ENCODE measurements at regions of chr4 and their contacts with region 1.

Region 1: GRCh38 chr4:87006676-87007527 is 72.1 kb downstream of the AFF1 start:
- DNase-seq: peak; percentile 97
- H3K4me3 Mint-ChIP-seq: peak overlapping the region; percentile 95
- H3K27ac Mint-ChIP-seq: peak overlapping the region; percentile 99
- H3K4me1 Mint-ChIP-seq: peaks cover 50% of the 10 kb centered on the region
- H3K27me3 Mint-ChIP-seq: no peaks in the 10 kb centered on the region

Region 2: DNA sequence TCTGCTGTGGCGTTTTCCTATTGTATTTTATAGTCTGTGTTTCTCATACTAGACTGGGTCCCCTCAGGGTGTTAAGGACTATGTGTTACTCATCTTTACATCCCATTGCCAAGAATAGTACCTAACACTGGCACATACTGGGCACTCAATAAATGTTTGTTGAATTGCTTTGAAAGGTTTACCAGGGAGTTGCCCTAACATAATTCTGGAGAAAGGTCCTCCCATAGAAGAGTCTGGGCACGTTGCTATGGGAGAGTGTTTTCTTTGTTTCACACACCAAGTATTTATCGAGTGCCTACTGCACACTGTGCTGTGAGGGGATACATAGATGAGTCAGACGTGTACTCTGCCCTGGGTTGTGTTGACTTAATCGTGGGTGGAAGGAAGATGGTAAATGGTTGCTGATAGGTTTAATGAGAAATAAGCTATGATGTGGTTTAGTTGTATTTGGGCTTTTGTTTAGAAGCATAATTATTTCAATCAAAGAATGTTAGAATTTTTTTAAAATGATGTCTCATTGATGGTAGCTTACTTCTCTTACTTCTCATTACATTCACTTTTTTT is 29.2 kb before region 1 on chr4:
- intact Hi-C with region 1: loop called (anchors 1 kb)
- DNase-seq: peak; percentile 61
- H3K4me3 Mint-ChIP-seq: no peak overlapping the region
- H3K27ac Mint-ChIP-seq: no peak overlapping the region
- H3K4me1 Mint-ChIP-seq: peaks cover 44% of the 10 kb centered on the region
- H3K27me3 Mint-ChIP-seq: no peaks in the 10 kb centered on the region

Region 3: DNA sequence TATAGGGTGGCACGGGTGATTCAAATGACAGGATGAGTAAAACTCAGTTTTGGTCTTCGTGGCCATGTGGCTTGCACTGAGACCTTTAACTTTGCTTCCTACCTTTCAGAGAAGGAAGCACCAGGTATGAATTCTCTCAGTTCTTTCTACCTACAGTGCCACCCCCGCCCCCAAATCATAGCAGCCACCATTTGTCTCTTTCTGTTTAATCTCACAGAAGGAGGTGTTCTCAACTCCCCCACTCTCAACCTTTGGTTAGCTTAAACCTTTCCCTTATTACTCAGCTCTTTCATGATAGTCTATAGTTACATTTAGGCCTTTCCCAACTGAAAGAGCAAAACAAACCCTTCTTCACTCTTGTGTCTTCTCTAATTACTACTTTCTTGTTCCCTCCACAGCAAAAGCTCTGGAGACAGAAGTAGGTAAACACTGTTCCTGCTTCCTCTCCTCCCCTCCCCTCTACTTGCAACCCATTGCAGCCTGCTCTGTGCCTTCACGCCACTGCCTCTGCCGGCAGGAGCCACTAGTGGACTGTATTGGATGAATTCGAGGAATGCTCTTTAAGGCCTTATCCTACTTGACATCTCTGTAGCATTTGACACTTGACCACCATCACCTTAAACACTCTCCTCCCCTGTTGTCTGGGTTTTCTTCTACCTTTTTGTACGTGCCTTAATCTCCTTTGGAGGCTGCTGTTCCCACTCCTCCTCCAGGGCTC is 51.6 kb after region 1 on chr4:
- intact Hi-C with region 1: loop called (anchors 1 kb)
- DNase-seq: no peak
- H3K4me3 Mint-ChIP-seq: peak overlapping the region; percentile 39
- H3K27ac Mint-ChIP-seq: peak overlapping the region; percentile 75
- H3K4me1 Mint-ChIP-seq: peaks cover 47% of the 10 kb centered on the region
- H3K27me3 Mint-ChIP-seq: no peaks in the 10 kb centered on the region

Region 4: DNA sequence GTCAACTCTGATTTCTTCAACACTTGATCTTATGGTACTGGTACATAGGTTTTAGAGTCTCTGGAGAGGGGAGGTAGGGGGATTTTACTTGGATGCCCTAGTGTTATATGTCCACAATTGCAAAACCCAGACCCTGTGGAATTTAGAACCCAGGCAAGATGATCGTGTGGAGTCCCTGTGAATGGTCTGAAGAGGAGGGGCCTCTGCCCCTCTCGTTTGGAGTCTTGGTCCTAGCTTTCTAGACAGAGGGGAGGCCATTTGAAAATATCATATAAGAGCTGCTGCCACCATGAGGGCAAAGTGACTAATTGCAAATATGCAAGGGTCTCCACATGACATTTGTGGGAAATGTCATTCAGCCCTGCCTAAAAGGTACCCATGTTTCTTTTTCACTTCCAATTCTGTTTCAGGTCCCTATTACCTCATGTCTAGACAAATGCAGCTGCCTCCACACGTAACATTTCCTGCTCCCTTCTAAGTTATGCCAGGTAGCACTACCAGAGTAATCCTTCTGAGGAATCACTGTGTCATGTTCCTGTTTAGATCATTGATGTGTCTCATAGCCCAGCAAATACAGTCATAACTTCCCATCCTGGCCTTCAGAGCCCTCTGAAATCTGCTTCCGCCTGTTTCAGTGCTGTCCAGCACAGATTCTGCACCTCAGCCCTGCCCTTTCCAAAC is 86.7 kb after region 1 on chr4:
- intact Hi-C with region 1: loop called (anchors 1 kb)
- DNase-seq: peak; percentile 80
- H3K4me3 Mint-ChIP-seq: no peak overlapping the region
- H3K27ac Mint-ChIP-seq: peak overlapping the region; percentile 34
- H3K4me1 Mint-ChIP-seq: peaks cover 22% of the 10 kb centered on the region
- H3K27me3 Mint-ChIP-seq: no peaks in the 10 kb centered on the region

Region 5: DNA sequence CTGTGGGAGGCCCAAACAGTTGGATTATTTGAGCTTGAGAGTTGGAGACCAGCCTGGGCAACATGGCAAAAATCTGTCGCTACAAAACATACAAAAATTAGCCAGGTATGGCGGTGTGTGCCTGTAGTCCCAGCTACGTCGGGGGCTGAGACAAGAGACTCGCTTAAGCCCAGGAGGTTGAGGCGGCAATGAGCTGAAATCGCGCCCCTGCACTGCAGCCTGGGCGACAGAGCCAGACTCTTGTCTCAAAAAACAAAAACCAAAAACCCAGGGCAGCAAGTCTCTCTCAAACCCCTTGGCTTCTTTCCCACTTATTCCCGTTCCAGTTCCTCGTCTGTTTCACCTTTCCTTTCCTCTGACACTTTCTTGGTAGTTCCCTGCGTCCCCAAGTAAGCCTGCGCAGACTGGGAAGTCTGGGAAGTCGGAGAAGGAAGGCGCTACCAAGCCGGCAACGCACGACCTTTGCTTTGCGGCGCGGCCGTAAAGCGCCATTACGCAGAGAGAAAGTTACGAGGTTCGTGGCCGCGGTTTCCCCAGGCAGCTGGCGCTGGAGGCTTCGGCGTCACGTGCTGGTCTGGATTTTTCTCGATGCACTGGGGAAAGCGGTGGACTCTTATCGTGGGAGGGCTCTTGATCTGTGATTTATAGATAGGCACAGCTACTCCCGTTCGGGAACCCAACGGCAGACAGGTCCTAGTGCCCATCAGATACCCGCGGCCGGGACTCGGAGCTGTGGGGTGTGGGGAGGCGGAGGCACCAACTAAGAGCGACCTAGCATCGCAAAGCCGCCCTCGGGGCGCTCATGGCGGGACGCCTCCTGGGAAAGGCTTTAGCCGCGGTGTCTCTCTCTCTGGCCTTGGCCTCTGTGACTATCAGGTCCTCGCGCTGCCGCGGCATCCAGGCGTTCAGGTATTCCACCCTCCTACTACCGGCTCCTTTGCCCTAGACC is 415.5 kb after region 1 on chr4 and contains the start of gene NUDT9:
- intact Hi-C with region 1: loop called (anchors 1 kb)
- DNase-seq: peak; percentile 96
- H3K4me3 Mint-ChIP-seq: peak within 1 kb of the TSS; percentile 99
- H3K27ac Mint-ChIP-seq: peak within 1 kb of the TSS; percentile 98
- H3K4me1 Mint-ChIP-seq: peaks cover 19% of the 10 kb centered on the region
- H3K27me3 Mint-ChIP-seq: no peaks in the 10 kb centered on the region
- total RNA-seq, gene NUDT9: 16.5 and 17.4 TPM in 2 replicates

Measured in activated CD4-positive, alpha-beta T cell treated with anti-CD3 and anti-CD28 coated beads, Interleukin-2, amount 10 ng/mL, durations not matched to agents 24 days and 14 days (primary cell).